ENCODE measurements at regions of chr21 and their contacts with region 1.

Region 1: GRCh38 chr21:44527983-44528633 is 11.9 kb downstream of the KRTAP10-1 start:
- DNase-seq: no peak
- H3K4me3 ChIP-seq: no peak overlapping the region
- H3K27ac ChIP-seq: no peak overlapping the region
- H3K4me1 ChIP-seq: no peaks in the 10 kb centered on the region
- H3K27me3 ChIP-seq: no peaks in the 10 kb centered on the region
- CTCF ChIP-seq: no peak

Region 2: GRCh38 chr21:44564886-44565598 is 36.9 kb after region 1 on chr21:
- CTCF ChIA-PET with region 1: no interaction called
- dilution Hi-C with region 1: loop called (anchors 5 kb)
- in situ Hi-C with region 1: no loop called
- intact Hi-C with region 1: no loop called
- DNase-seq: no peak
- H3K4me3 ChIP-seq: no peak overlapping the region
- H3K27ac ChIP-seq: no peak overlapping the region
- H3K4me1 ChIP-seq: no peaks in the 10 kb centered on the region
- H3K27me3 ChIP-seq: no peaks in the 10 kb centered on the region
- CTCF ChIP-seq: no peak